Heart left ventricle (tissue), 16 donors: ENCODE measurements at regions of chr11 and their contacts with region 1.

Region 1: DNA sequence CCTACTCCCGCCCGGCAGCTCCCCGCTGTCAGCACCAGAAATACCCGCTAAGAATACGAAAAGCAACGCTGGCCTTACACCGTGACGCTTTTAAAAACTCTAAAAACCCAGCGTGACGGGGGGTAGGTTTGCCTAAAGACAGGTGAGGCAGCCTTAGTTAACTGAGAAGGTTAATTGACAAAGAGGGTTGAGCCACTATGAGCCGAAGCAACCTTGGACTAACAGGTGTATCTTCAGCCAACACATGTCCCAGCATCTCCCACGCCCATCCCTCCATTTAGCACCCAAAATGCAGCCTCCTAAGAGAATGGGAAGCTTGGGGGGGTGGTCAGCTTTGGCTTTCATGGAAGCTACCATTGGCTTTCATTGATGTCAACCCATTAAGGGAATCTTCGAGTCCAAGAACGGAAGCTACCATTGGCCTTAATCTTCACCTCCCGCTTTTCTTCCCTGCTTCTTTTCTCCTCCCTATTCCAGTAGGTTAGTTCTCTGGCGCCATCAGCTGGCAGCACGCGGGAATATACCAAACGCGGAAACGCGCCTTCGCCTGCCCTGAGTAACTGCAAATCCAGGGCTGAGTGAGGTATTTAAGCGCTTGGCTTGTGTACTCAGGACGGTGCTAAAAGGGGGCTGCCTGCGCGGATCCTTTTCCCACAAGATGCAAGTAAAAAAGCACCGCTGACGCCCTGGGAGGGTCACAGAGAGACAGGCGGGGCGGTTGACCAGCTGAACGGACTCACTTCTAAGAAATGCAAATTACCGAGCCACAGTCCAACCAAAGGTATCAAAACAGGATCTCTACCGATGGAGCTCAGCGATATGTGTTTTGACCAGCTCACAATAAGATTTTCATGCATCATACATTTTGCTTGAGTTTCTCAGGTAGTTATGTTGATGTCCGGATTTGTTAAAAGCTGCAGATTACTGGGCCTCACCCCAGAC is 38.5 kb upstream of the GLYATL1 start:
- DNase-seq: peak; percentile 53 to 74 (median 60)
- ATAC-seq: peak in 3 of 4 donors; percentile 58 to 75 (median 65)
- H3K4me3 ChIP-seq: no peak overlapping the region
- H3K27ac ChIP-seq: no peak overlapping the region
- H3K4me1 ChIP-seq: peaks cover 0 to 8% (median 0%) of the 10 kb centered on the region in 12 donors
- H3K27me3 ChIP-seq: peaks cover 2 to 56% (median 26%) of the 10 kb centered on the region in 9 donors
- CTCF ChIP-seq: peak; percentile 8 to 57 (median 36)
- POLR2A ChIP-seq: no peak

Region 2: DNA sequence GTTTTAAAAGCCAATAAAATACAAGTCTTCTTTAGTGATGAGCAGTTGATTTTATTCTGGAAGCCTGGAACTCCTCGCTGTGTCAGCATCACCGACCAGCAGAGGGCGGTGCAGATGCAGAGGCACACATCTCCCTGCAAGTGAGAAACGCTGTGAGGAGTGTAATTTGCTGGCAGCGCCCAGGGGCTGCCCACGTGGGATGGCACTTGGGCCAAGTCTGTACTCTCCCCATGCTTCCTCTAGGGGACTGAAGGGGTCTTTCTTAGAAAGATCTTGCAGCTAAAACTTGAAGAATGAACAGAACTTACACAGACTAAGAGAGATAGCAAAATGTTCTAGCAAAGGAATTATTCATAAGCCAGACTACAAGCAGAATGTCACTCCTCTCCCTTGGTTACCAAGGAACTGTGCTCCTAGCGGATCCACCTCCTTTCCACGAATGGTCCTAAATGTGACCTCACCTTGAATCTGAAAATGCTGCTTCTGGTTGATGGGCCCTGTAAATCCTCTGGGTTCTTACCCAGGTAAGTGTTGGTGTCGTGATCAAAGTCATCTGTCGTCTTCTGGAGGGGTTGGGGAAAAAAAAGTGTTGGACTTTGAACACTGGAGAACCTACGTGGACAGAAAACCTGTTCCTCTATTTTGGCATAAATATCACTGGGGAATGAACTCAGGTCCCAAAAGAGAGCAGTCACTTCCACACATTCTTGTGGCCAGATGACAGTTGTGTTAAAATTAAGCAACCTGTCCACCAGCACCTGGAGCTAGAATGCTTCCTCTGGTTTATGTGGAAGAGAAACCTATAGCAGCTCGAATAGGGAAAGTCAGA is 246.5 kb before region 1 on chr11:
- intact Hi-C with region 1: loop called in 2 of 10 experiments (anchors 10 kb)
- DNase-seq: peak; percentile 70 to 89 (median 78)
- ATAC-seq: peak; percentile 79 to 97 (median 92)
- H3K4me3 ChIP-seq: no peak overlapping the region
- H3K27ac ChIP-seq: no peak overlapping the region
- H3K4me1 ChIP-seq: peaks cover 0 to 21% (median 4%) of the 10 kb centered on the region in 12 donors
- H3K27me3 ChIP-seq: no peaks in the 10 kb centered on the region
- CTCF ChIP-seq: peak; percentile 75 to 95 (median 88)
- POLR2A ChIP-seq: no peak

Region 3: DNA sequence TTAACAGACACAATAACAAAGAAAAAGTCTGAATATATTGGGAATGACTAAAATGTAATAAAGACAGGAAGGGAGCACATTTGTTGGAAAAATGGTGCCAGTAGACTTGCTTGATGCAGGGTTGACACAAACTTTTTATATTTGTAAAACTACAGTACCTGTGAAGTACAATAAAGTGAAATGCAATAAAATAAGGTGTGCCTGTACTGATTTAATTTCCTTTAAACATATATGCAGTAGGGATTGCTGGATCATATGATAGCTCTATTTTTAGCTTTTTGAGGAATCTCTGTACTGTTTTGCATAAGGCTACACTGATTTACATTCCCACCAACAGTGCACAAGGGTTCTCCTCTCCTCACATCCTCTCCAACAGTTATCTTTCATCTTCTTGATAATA is 43.9 kb before region 1 on chr11:
- intact Hi-C with region 1: no loop called
- DNase-seq: no peak
- ATAC-seq: no peak
- H3K4me3 ChIP-seq: no peak overlapping the region
- H3K27ac ChIP-seq: no peak overlapping the region
- H3K4me1 ChIP-seq: no peaks in the 10 kb centered on the region
- H3K27me3 ChIP-seq: no peaks in the 10 kb centered on the region
- CTCF ChIP-seq: no peak
- POLR2A ChIP-seq: no peak